ENCODE measurements at regions of chr11 and their contacts with region 1.

Region 1: GRCh38 chr11:119323538-119324033 is 6.7 kb upstream of the MCAM start:
- DNase-seq: peak; percentile 57 to 93 (median 84)
- H3K4me3 ChIP-seq: no peak overlapping the region
- H3K27ac ChIP-seq: no peak overlapping the region
- H3K4me1 ChIP-seq: peaks cover 9 to 19% of the 10 kb centered on the region in 2 donors
- H3K27me3 ChIP-seq: no peaks in the 10 kb centered on the region
- CTCF ChIP-seq: peak; percentile 70 to 81 (median 78)
- POLR2A ChIP-seq: no peak

Region 2: DNA sequence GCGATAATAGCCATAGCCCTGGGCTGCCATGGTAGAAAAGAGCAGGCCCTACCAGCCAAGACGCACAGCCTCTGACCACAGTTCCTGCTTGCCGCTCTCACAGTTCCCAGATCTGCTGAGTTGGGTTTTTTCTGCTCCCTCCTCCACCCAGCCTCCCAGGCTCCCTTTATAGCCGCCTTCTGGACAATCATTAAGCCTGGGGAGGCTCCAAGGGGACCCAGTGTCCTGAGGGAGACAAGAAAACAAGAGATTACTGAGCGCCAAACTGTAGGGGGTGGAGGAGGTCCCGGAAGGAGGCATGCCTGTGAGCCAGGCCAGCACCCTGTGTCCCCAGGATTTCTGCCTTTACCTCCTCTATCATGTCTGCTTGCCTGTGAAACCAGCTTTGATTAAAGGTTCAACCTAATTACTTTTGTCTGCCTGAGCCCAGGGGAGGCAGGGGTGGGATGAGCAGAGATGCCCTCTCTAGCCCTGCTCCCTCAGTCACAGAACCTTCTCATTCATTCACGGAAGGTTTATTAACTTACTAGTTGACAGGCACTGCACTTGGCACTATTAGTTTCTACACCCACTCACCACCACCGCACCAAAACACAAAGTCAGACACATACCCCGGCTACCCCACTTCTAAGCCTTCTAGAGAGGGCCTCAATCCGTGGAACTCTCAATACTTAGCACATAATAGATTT is 294.1 kb before region 1 on chr11:
- intact Hi-C with region 1: no loop called
- DNase-seq: peak in 2 of 7 donors; percentile 22 to 30
- H3K4me3 ChIP-seq: peak overlapping the region in 1 of 4 donors; percentile 58
- H3K27ac ChIP-seq: peak overlapping the region in 2 of 5 donors; percentile 52 to 79
- H3K4me1 ChIP-seq: peaks cover 5 to 20% of the 10 kb centered on the region in 2 donors
- H3K27me3 ChIP-seq: no peaks in the 10 kb centered on the region
- CTCF ChIP-seq: no peak
- POLR2A ChIP-seq: no peak

Region 3: DNA sequence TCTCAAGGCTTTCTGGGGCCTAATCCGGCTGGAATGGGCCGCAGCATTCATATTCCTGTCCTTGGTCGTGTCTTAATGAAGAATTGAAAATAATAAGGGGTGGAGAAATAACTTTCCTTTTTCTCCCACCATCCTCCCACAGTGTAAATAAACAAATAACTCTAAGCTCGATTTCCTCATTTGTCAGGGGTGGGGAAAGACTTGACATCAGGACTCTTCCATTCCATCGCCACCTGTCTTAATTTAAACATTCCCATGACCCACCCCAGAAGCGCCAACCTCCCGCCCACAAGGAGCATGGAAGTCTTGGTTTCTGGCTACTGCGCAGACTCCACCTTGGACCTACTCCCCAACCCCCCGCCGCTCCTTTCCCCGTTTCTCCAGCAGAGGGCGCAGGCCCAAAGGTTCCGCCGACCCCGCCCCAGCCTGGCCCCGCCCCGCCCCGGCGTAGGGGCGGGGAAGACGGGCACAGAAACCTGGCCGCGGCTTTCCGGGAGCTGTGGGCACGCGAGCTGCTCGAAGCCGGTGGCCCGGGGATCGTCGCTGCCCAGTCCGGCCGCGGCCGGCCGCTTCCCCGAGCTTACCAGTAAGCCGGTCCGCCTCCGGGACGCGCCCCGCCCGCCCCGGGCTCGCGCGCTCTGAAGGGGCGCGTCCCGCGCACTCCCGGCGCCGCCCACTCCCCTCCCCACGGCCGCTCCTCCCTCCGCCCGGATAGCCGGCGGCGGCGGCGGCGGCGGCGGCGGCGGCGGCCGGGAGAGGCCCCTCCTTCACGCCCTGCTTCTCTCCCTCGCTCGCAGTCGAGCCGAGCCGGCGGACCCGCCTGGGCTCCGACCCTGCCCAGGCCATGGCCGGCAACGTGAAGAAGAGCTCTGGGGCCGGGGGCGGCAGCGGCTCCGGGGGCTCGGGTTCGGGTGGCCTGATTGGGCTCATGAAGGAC is 117.7 kb before region 1 on chr11 and contains the start of gene CBL:
- intact Hi-C with region 1: loop called in 1 of 2 experiments (anchors 5 kb)
- DNase-seq: peak; percentile 93 to 98 (median 96)
- H3K4me3 ChIP-seq: peak within 1 kb of the TSS; percentile 78 to 95 (median 87)
- H3K27ac ChIP-seq: peak within 1 kb of the TSS; percentile 72 to 92 (median 87)
- H3K4me1 ChIP-seq: peaks cover 7 to 33% of the 10 kb centered on the region in 2 donors
- H3K27me3 ChIP-seq: no peaks in the 10 kb centered on the region
- CTCF ChIP-seq: peak; percentile 77 to 93 (median 84)
- POLR2A ChIP-seq: peak; percentile 16 to 50
- total RNA-seq, gene CBL: 5.3 to 21.9 (median 13.8) TPM

Measured in adrenal gland (tissue), 19 donors.